ENCODE measurements at regions of chr3 and their contacts with region 1.

Region 1: DNA sequence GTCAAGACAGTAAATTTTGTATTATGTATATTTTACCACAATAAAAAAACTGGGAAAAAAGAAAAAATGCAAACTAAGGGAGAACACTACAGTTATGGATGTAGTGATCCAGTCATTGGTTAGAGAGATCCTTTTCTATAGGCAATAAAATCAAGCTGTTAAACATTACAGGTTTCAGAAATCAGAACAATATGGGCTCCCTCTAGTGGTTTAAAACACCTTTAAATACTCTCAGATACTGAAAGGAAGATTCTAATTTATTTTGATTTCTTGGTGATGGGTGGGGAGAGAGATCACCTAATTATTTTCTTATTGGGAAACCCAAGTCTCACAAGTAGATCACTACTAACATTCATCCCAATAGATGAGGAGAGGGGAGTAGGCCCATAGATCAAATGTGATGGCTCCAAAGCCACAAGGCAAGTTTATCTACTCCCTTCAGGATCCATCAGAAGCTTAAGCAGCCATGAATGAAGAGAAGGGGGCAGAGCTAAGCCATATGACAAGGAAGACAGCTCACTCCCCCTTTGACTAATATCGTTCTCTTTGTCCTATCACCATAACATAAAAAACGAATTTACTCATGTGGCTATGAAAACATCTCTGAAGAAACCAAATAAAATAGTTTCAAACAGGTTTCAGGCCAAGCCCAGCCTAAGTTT is 118.6 kb downstream of the ANO10 start:
- DNase-seq: peak; percentile 58

Region 2: GRCh38 chr3:42961633-42962032 is 541.6 kb before region 1 on chr3:
- in situ Hi-C with region 1: loop called (anchors 10 kb)
- DNase-seq: peak; percentile 69

Region 3: GRCh38 chr3:43418601-43419272 is 84.5 kb before region 1 on chr3:
- in situ Hi-C with region 1: no loop called
- DNase-seq: no peak

Region 4: DNA sequence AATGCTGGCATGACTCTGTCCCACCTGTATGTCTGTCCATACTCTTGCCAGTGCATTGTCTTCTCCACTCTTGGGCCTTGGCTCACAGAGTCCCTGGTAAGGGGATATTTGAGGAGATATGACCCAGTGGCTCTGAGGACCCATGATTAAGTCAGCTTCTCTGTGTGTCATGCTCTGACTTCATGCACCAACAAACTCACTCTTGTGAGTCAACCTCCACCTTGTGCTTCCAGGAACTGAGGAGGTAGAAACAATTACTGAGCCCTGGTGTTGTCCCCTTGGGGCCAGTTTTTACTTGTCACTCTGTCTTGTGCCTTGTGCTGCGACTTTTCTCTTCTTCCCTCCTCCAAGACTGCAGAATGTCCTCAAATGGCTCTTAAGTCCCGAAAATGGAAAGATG is 314.6 kb after region 1 on chr3:
- in situ Hi-C with region 1: no loop called
- DNase-seq: no peak

Region 5: DNA sequence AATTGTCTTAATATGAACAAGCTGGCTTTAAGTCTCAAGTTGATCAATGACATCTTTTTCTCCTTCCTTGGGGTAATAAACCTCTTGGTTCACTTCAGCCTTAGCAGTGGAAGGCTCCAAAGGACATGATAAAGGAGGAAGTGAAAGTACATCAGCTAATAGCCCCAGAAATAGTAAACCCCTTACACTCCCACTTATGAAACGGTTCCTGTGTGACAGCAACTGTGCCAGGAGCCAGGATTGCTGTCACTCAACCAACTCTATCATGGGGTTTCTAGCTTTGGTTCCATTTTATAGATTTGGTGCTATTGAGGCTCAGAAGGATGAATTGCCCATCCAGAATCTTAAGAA is 404.3 kb after region 1 on chr3:
- in situ Hi-C with region 1: no loop called
- DNase-seq: no peak

Measured in SK-MEL-5 (cell line).